ENCODE measurements at regions of chr4 and their contacts with region 1.

Region 1: DNA sequence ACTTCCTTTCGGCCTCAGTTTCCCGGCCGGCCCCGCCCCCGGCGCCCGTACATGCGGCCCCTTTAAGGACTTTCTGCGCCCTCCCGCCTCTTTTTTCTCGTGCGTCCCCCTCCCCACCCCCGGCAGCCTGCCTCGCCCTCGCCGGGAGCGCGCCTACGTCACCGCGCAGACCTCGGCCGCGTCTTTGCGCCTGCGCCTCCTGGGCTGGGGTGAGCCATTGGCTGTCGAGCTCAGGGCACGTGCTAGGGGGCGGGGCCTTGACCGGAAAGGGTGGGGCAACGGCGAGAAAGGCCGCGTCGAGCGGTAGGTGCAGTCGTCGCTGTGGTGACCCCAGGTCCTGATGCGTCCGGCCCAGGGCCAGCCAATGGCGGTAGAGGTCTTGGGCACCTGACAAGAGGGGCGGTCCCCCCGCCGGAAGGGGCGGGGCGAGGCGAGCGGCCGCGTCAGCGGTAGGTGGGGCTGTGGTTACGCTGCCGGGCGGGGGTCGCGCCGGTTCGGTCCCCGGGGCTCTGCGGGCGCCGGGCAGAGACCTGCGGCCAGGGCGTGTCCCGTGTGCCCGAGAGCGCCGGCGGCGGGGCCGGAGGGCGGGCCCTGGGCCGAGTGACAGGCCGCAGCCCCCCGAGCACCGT is at the start of gene UVSSA:
- DNase-seq: peak; percentile 100
- H3K4me3 ChIP-seq: peak within 1 kb of the TSS; percentile 89
- H3K27ac ChIP-seq: peak within 1 kb of the TSS; percentile 98
- H3K4me1 ChIP-seq: peaks cover 5% of the 10 kb centered on the region
- H3K27me3 ChIP-seq: no peaks in the 10 kb centered on the region
- CTCF ChIP-seq: no peak
- total RNA-seq, gene UVSSA: 16.7 to 55.7 TPM

Region 2: DNA sequence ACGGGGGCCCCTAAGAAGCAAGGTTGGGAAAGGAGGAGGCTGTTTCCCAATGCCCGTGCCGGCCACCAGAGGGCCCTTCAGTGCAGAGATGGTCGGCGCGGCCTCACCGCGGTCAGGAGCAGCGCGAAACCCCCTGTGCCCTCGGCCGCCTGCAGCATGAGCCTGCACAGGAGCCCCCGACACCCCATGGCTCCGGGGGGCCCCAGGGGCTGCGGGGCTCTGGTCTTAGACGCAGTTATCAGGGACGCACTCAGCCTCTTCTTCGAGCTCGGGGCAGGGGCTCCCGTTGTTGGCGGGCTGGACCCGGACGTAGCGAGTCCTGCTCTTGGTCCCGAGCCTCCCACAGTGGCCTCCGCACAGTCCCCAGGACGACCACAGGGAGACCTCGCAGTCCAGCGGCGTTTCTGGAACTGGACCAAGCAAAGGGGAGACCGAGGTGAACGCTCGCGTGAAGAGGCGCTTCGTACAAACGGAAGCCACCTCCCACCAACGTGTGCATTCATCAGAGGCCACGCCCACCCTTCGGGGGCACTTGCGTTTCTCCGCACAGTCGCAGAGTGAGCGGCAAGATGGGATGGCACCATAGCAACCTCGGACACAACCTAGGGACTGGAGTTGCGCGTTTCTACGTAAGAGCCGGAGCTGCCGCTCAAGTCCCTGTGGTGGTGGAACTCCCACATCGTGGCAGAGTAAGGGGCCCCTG is 179.5 kb before region 1 on chr4:
- intact Hi-C with region 1: loop called (anchors 10 kb)
- DNase-seq: peak; percentile 86
- H3K4me3 ChIP-seq: peak overlapping the region; percentile 72
- H3K27ac ChIP-seq: peak overlapping the region; percentile 27
- H3K4me1 ChIP-seq: peaks cover 25% of the 10 kb centered on the region
- H3K27me3 ChIP-seq: peaks cover 21% of the 10 kb centered on the region
- CTCF ChIP-seq: peak; percentile 86

Region 3: DNA sequence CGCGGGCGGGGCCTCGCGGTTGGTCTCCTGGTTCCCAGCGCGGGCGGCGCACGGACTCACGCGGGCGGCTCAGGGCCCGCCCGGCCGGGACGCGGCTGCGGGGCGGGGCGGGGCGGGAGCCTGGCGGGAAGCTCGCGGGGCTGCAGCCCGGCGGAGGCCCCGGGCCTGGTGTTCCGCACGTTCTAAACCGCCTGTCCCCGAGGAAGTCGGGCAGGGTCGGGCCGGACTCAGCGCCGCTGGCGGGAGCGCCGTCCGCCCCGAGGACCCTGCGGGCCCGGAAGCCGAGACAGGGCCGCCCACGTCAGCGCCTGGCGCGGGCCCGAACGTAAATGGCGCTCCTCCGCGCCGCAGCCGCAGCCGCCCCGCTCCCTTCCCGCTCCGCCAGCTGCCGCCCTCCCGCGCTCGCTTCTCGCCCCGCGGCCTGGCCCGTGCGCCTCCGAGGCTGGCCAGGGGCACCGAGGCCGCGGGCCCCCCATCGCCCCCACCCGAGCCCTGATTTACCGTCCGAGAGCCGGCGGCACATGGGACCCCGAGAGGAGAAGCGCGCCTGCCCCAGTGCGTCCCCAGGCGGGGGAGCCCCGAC is 97.7 kb before region 1 on chr4:
- intact Hi-C with region 1: loop called (anchors 5 kb)
- DNase-seq: peak; percentile 82
- H3K4me3 ChIP-seq: peak overlapping the region; percentile 62
- H3K27ac ChIP-seq: peak overlapping the region; percentile 94
- H3K4me1 ChIP-seq: peaks cover 26% of the 10 kb centered on the region
- H3K27me3 ChIP-seq: no peaks in the 10 kb centered on the region
- CTCF ChIP-seq: no peak

Region 4: GRCh38 chr4:1289207-1290164 is 57.4 kb before region 1 on chr4 and contains the start of gene MAEA:
- intact Hi-C with region 1: loop called (anchors 10 kb)
- DNase-seq: peak; percentile 97
- H3K4me3 ChIP-seq: peak within 1 kb of the TSS; percentile 91
- H3K27ac ChIP-seq: peak within 1 kb of the TSS; percentile 77
- H3K4me1 ChIP-seq: peaks cover 13% of the 10 kb centered on the region
- H3K27me3 ChIP-seq: no peaks in the 10 kb centered on the region
- CTCF ChIP-seq: no peak
- total RNA-seq, gene MAEA: 65.8 to 124 TPM